ENCODE measurements at regions of chr7 and their contacts with region 1.

Region 1: GRCh38 chr7:101363734-101364374 is 1.2 kb downstream of the COL26A1 start:
- DNase-seq: no peak
- H3K4me3 ChIP-seq: peak overlapping the region; percentile 36
- CTCF ChIP-seq: peak; percentile 85

Region 2: DNA sequence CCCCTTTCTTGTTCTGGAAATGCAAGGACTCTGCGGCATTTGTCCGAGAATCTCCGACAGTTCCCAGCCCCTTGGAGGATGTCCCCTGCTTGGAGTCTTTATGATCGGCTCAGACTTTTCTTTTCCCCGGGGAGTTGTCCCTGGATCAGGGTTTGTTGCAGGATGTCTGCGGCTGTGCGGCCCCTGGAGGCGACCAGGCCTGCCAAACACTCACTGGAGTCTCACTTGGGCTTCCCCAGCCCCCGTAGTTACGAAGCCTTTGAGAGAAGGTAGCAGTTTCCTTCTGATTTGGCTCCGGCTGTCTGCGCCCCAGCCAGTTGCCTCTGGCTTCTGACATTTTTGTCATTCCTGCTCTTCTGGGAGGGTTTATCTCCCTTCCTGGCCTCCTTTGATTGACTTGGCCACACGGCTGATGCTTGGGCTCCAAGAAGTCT is 14.9 kb after region 1 on chr7:
- CTCF ChIA-PET with region 1: interaction called, 52 read pairs
- POLR2A ChIA-PET with region 1: no interaction called
- DNase-seq: no peak
- H3K4me3 ChIP-seq: no peak overlapping the region
- CTCF ChIP-seq: no peak

Region 3: GRCh38 chr7:101402088-101402779 is 38.4 kb after region 1 on chr7:
- CTCF ChIA-PET with region 1: interaction called, 10 read pairs
- POLR2A ChIA-PET with region 1: no interaction called
- DNase-seq: peak; percentile 9
- H3K4me3 ChIP-seq: 0 out of 2 replicates have a peak overlapping the region, but pooled peaks have one; percentile 8
- CTCF ChIP-seq: no peak

Region 4: GRCh38 chr7:101410743-101411507 is 47.1 kb after region 1 on chr7:
- CTCF ChIA-PET with region 1: interaction called, 64 read pairs
- POLR2A ChIA-PET with region 1: no interaction called
- DNase-seq: no peak
- H3K4me3 ChIP-seq: no peak overlapping the region
- CTCF ChIP-seq: peak; percentile 87

Region 5: GRCh38 chr7:101442521-101442981 is 78.7 kb after region 1 on chr7:
- CTCF ChIA-PET with region 1: interaction called, 34 read pairs
- POLR2A ChIA-PET with region 1: no interaction called
- DNase-seq: no peak
- H3K4me3 ChIP-seq: no peak overlapping the region
- CTCF ChIP-seq: no peak

Region 6: DNA sequence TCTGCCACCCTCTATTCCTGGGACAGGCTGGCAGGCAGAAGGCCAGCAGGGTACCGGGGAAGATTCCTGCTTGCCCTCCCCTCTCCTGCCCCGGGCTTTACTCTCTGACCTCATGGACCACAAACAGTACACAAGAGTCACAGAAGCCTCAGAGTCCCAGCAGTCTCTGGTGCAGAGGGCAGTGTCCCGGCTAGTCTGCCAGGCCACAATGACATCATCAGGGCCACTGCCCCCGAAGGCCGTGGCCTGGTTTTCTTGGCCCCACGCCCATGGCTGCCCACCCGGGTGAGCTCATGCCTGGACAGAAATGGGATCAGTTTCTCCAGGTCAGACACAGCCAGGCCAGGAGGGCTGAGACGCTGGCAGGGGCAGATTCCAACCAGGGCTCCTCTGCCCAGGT is 173.4 kb after region 1 on chr7:
- CTCF ChIA-PET with region 1: interaction called, 15 read pairs
- POLR2A ChIA-PET with region 1: no interaction called
- DNase-seq: no peak
- H3K4me3 ChIP-seq: no peak overlapping the region
- CTCF ChIP-seq: no peak

Region 7: GRCh38 chr7:101542527-101543241 is 178.8 kb after region 1 on chr7:
- CTCF ChIA-PET with region 1: interaction called, 13 read pairs
- POLR2A ChIA-PET with region 1: no interaction called
- DNase-seq: no peak
- H3K4me3 ChIP-seq: no peak overlapping the region
- CTCF ChIP-seq: peak; percentile 85